Naive thymus-derived CD4-positive, alpha-beta T cell (primary cell): ENCODE measurements at regions of chr11 and their contacts with region 1.

Region 1: DNA sequence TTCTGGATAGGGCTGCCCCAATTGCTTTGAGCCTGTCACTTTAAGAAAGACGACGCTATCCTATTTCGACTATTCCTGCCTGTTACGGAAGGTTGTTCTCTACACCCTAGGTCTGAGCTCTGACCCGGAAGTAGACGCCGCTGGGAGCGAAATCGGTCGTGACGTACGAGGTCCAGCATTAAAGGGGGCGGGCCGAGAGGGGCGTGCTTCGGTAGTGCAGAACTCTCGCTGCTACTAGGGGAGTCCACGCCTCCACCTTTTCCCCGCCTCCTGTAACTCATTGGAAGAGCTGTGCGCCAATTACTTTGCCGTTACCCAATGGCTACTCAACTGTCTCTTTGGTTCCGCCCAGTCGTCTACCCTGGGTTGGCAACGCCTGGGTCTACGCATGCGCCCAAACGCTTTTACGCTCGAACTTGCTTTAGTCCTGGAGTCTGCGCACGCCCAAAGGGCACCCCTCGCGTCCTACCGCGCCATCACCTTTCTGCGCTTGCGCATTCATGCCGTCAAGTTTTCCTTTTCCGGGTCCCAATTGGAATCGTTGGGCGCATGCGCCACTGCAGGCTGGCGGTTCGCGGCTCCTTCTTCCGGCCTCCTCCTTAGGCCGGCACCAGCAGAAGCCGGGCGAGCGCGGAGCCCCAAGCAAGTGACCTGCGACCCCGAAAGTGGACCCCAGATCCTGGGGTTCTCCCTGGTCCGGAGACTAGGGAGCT is at the start of gene PCNX3:
- DNase-seq: peak; percentile 95 to 100 (median 100)
- ATAC-seq: peak; percentile 92
- H3K4me3 ChIP-seq: peak within 1 kb of the TSS; percentile 89
- H3K4me3 Mint-ChIP-seq: peak within 1 kb of the TSS; percentile 94 to 99 (median 97)
- H3K27ac ChIP-seq: peak within 1 kb of the TSS; percentile 98
- H3K27ac Mint-ChIP-seq: peak within 1 kb of the TSS; percentile 90 to 99 (median 97)
- H3K4me1 ChIP-seq: peaks cover 42 to 45% of the 10 kb centered on the region in 2 donors
- H3K4me1 Mint-ChIP-seq: peaks cover 28 to 49% (median 39%) of the 10 kb centered on the region in 7 donors
- H3K27me3 ChIP-seq: no peaks in the 10 kb centered on the region
- H3K27me3 Mint-ChIP-seq: peaks cover 0 to 6% (median 0%) of the 10 kb centered on the region in 5 donors
- total RNA-seq, gene PCNX3: 50.4 to 64.9 (median 56.6) TPM

Region 2: DNA sequence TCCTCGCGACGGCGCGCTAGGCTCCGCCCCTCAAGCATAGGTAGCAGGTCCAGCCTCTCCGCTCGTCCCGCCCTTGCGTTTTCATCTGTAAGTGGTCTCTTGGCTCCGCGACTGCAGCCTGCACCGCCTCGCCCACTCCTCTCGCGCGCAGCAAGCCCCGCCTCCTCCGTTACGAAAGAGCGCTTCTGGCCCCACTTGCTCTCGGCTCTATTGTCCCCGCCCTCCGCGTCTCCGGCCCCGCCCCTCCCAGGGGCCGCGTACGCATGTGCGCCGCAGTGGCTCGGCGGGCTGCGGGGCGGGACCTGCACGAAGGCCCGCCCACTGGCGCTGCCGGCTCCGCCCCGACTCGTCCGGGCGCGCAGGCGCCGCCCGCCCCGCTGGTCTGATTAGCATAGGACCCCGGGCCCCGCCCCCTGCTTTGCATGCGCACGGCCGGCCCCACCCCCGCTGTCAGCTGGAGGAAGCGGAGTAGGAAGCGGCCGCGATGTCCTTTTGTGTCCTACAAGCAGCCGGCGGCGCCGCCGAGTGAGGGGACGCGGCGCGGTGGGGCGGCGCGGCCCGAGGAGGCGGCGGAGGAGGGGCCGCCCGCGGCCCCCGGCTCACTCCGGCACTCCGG is 1310.2 kb before region 1 on chr11 and contains the start of gene ESRRA:
- CTCF ChIA-PET with region 1: no interaction called
- POLR2A ChIA-PET with region 1: no interaction called
- intact Hi-C with region 1: no loop called
- DNase-seq: peak; percentile 99 to 100 (median 99)
- ATAC-seq: peak; percentile 86
- H3K4me3 ChIP-seq: peak within 1 kb of the TSS; percentile 97
- H3K4me3 Mint-ChIP-seq: peak within 1 kb of the TSS; percentile 94 to 98 (median 96)
- H3K27ac ChIP-seq: peak within 1 kb of the TSS; percentile 91
- H3K27ac Mint-ChIP-seq: peak within 1 kb of the TSS; percentile 81 to 98 (median 95)
- H3K4me1 ChIP-seq: peaks cover 21 to 26% of the 10 kb centered on the region in 2 donors
- H3K4me1 Mint-ChIP-seq: peaks cover 21 to 36% (median 30%) of the 10 kb centered on the region in 7 donors
- H3K27me3 ChIP-seq: peaks cover 0 to 8% of the 10 kb centered on the region in 2 donors
- H3K27me3 Mint-ChIP-seq: peaks cover 10 to 23% (median 13%) of the 10 kb centered on the region in 5 donors
- total RNA-seq, gene ESRRA: 23.7 to 42.0 (median 27.9) TPM

Region 3: GRCh38 chr11:65187971-65188461 is 427.4 kb before region 1 on chr11:
- CTCF ChIA-PET with region 1: no interaction called
- POLR2A ChIA-PET with region 1: no interaction called
- intact Hi-C with region 1: no loop called
- DNase-seq: no peak
- ATAC-seq: no peak
- H3K4me3 ChIP-seq: no peak overlapping the region
- H3K4me3 Mint-ChIP-seq: no peak overlapping the region
- H3K27ac ChIP-seq: no peak overlapping the region
- H3K27ac Mint-ChIP-seq: no peak overlapping the region
- H3K4me1 ChIP-seq: peaks cover 0 to 5% of the 10 kb centered on the region in 2 donors
- H3K4me1 Mint-ChIP-seq: peaks cover 15 to 26% (median 17%) of the 10 kb centered on the region in 7 donors
- H3K27me3 ChIP-seq: no peaks in the 10 kb centered on the region
- H3K27me3 Mint-ChIP-seq: no peaks in the 10 kb centered on the region

Region 4: GRCh38 chr11:65329944-65330403 is 285.4 kb before region 1 on chr11:
- CTCF ChIA-PET with region 1: interaction called, 3 read pairs
- POLR2A ChIA-PET with region 1: interaction called, 3 read pairs
- intact Hi-C with region 1: loop called in 1 of 2 experiments (anchors 1 kb)
- DNase-seq: peak; percentile 51 to 79 (median 75)
- ATAC-seq: peak; percentile 52
- H3K4me3 ChIP-seq: no peak overlapping the region
- H3K4me3 Mint-ChIP-seq: peak overlapping the region in 3 of 10 donors; percentile 26 to 52 (median 51)
- H3K27ac ChIP-seq: no peak overlapping the region
- H3K27ac Mint-ChIP-seq: peak overlapping the region in 6 of 9 donors; percentile 32 to 81 (median 51)
- H3K4me1 ChIP-seq: peaks cover 7 to 14% of the 10 kb centered on the region in 2 donors
- H3K4me1 Mint-ChIP-seq: peaks cover 7 to 22% (median 17%) of the 10 kb centered on the region in 7 donors
- H3K27me3 ChIP-seq: no peaks in the 10 kb centered on the region
- H3K27me3 Mint-ChIP-seq: peaks cover 0 to 5% (median 0%) of the 10 kb centered on the region in 5 donors

Region 5: GRCh38 chr11:65546217-65546958 is 69.0 kb before region 1 on chr11:
- CTCF ChIA-PET with region 1: no interaction called
- POLR2A ChIA-PET with region 1: interaction called, 10 read pairs
- intact Hi-C with region 1: loop called (anchors 1 to 2 kb)
- DNase-seq: peak; percentile 95 to 100 (median 98)
- ATAC-seq: peak; percentile 96
- H3K4me3 ChIP-seq: peak overlapping the region; percentile 14
- H3K4me3 Mint-ChIP-seq: peak overlapping the region; percentile 39 to 86 (median 84)
- H3K27ac ChIP-seq: peak overlapping the region; percentile 75
- H3K27ac Mint-ChIP-seq: peak overlapping the region; percentile 86 to 98 (median 88)
- H3K4me1 ChIP-seq: peaks cover 27 to 41% of the 10 kb centered on the region in 2 donors
- H3K4me1 Mint-ChIP-seq: peaks cover 40 to 73% (median 54%) of the 10 kb centered on the region in 7 donors
- H3K27me3 ChIP-seq: no peaks in the 10 kb centered on the region
- H3K27me3 Mint-ChIP-seq: no peaks in the 10 kb centered on the region

Region 6: DNA sequence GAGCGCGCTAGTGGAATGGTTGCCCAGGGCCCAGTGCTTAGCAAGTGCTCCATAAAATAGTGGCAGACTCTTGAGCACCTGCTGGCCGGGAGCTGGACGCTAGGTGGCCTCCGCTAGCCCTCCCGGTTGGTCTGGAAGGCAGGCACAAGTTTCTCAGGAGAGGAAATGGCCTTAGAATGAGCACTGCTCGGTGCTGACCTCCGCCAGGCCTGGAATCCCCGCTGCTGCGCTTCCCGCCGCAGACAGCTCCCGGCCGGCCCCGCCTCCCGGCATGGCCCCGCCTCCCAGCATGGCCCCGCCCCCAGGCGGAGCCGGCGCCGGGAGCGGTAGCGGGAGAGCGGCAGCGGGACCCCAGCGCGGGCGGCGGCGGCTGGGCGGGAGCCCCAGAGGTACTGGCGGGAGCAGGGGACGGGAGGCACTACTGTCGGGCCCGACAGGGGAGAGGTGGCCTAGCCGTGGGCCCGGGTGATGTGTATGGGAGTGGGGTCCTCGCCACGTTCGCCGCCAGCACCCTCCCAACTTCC is 22.5 kb after region 1 on chr11 and contains the start of gene SIPA1:
- CTCF ChIA-PET with region 1: interaction called, 4 read pairs
- POLR2A ChIA-PET with region 1: interaction called, 45 read pairs
- intact Hi-C with region 1: loop called (anchors 1 kb)
- DNase-seq: peak; percentile 57 to 93 (median 74)
- ATAC-seq: peak; percentile 62
- H3K4me3 ChIP-seq: peak within 1 kb of the TSS; percentile 90
- H3K4me3 Mint-ChIP-seq: peak within 1 kb of the TSS; percentile 89 to 99 (median 95)
- H3K27ac ChIP-seq: peak within 1 kb of the TSS; percentile 97
- H3K27ac Mint-ChIP-seq: peak within 1 kb of the TSS; percentile 76 to 100 (median 97)
- H3K4me1 ChIP-seq: peaks cover 45 to 58% of the 10 kb centered on the region in 2 donors
- H3K4me1 Mint-ChIP-seq: peaks cover 26 to 52% (median 47%) of the 10 kb centered on the region in 7 donors
- H3K27me3 ChIP-seq: no peaks in the 10 kb centered on the region
- H3K27me3 Mint-ChIP-seq: no peaks in the 10 kb centered on the region
- total RNA-seq, gene SIPA1: 145 to 249 (median 198) TPM

Region 7: DNA sequence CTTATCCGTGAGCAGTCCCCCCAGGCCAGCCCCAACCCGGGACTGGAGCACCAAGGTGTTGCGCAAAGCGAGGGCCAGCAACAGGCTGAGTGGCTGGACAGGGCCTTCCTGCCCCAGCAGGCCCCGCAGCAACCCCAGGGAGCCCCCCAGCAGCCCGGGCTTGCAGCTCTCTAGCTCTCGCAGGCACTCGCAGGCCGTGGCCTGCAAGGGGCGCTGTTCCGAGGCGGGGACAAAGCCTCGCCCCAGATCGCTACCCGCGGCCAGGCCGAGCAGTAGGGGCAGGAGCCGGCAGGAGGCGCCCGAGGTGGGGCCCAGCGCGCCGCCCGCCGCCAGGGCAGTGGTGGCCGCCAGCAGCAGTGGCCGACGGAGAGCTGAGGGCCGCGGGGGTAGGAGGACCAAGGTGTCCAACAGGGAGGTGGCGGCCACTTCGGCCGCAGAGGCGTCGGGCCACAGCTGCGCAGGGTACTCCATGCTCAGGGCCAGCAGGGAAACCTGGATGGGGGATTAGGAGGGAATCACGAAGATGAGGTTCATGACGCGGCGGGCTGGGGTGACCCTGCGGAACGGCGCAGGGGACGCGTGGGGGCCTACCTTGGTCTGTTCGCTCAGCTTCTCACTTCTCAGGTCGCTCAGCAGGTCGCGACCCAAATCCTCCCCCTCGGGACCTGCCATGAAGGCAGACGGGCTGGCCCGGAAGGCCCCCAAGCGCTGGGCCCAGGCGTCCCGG is 164.6 kb after region 1 on chr11:
- CTCF ChIA-PET with region 1: no interaction called
- POLR2A ChIA-PET with region 1: no interaction called
- intact Hi-C with region 1: no loop called
- DNase-seq: peak; percentile 55 to 90 (median 72)
- ATAC-seq: peak; percentile 84
- H3K4me3 ChIP-seq: peak overlapping the region; percentile 74
- H3K4me3 Mint-ChIP-seq: peak overlapping the region; percentile 77 to 91 (median 86)
- H3K27ac ChIP-seq: peak overlapping the region; percentile 75
- H3K27ac Mint-ChIP-seq: peak overlapping the region in 7 of 9 donors; percentile 39 to 88 (median 73)
- H3K4me1 ChIP-seq: peaks cover 7 to 10% of the 10 kb centered on the region in 2 donors
- H3K4me1 Mint-ChIP-seq: peaks cover 5 to 20% (median 13%) of the 10 kb centered on the region in 7 donors
- H3K27me3 ChIP-seq: no peaks in the 10 kb centered on the region
- H3K27me3 Mint-ChIP-seq: peaks cover 0 to 15% (median under 1%) of the 10 kb centered on the region in 5 donors

Region 8: DNA sequence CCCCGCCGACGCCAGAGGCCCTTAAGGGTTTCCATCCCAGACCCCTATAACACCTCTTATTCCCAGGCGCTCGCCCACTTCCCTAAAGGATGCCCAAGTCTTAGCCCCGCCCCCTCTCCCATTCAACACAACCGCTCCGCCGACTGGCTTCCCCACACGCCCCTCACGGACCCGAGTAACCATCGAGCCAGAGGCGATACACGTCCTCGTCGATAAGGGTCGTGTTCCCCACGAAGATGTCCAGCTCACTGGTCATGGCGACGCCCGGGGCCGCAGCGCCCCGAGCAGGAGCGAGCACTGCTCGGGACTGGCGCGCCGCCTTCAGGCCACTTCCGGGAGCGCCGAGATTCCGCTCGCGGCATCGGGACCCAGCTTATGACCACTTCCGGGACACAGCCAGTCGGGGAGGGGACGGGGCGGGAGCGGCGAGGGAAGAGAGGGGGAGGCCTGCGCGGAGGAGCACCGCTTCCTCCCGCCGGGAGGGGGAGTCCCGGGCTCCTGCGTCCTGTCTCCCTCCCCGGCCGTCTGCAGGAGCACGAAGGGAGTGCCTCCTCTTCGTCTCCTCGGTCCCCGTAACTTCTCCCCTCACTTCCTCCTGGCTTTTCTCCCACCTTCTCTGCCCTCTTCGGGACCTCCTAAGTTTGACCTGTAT is 272.9 kb after region 1 on chr11 and contains the start of gene FIBP:
- CTCF ChIA-PET with region 1: interaction called, 4 read pairs
- POLR2A ChIA-PET with region 1: interaction called, 5 read pairs
- intact Hi-C with region 1: loop called in 1 of 2 experiments (anchors 1 kb)
- DNase-seq: peak; percentile 84 to 95 (median 90)
- ATAC-seq: peak; percentile 74
- H3K4me3 ChIP-seq: peak within 1 kb of the TSS; percentile 84
- H3K4me3 Mint-ChIP-seq: peak within 1 kb of the TSS; percentile 88 to 97 (median 93)
- H3K27ac ChIP-seq: peak within 1 kb of the TSS; percentile 92
- H3K27ac Mint-ChIP-seq: peak within 1 kb of the TSS; percentile 93 to 99 (median 97)
- H3K4me1 ChIP-seq: peaks cover 37 to 45% of the 10 kb centered on the region in 2 donors
- H3K4me1 Mint-ChIP-seq: peaks cover 50 to 69% (median 53%) of the 10 kb centered on the region in 7 donors
- H3K27me3 ChIP-seq: no peaks in the 10 kb centered on the region
- H3K27me3 Mint-ChIP-seq: no peaks in the 10 kb centered on the region
- total RNA-seq, gene FIBP: 25.9 to 72.1 (median 43.4) TPM

Region 9: GRCh38 chr11:66268283-66268951 is 653.0 kb after region 1 on chr11 and contains the start of gene RAB1B:
- CTCF ChIA-PET with region 1: no interaction called
- POLR2A ChIA-PET with region 1: interaction called, 5 read pairs
- intact Hi-C with region 1: loop called in 1 of 2 experiments (anchors 2 kb)
- DNase-seq: peak; percentile 99 to 100 (median 99)
- ATAC-seq: peak; percentile 89
- H3K4me3 ChIP-seq: peak within 1 kb of the TSS; percentile 91
- H3K4me3 Mint-ChIP-seq: peak within 1 kb of the TSS; percentile 88 to 100 (median 95)
- H3K27ac ChIP-seq: peak within 1 kb of the TSS; percentile 90
- H3K27ac Mint-ChIP-seq: peak within 1 kb of the TSS; percentile 95 to 99 (median 97)
- H3K4me1 ChIP-seq: peaks cover 16 to 38% of the 10 kb centered on the region in 2 donors
- H3K4me1 Mint-ChIP-seq: peaks cover 26 to 48% (median 34%) of the 10 kb centered on the region in 7 donors
- H3K27me3 ChIP-seq: no peaks in the 10 kb centered on the region
- H3K27me3 Mint-ChIP-seq: peaks cover 0 to 3% (median 0%) of the 10 kb centered on the region in 5 donors
- total RNA-seq, gene RAB1B: 60.6 to 151 (median 70.7) TPM